ENCODE measurements at regions of chr3 and their contacts with region 1.

Region 1: DNA sequence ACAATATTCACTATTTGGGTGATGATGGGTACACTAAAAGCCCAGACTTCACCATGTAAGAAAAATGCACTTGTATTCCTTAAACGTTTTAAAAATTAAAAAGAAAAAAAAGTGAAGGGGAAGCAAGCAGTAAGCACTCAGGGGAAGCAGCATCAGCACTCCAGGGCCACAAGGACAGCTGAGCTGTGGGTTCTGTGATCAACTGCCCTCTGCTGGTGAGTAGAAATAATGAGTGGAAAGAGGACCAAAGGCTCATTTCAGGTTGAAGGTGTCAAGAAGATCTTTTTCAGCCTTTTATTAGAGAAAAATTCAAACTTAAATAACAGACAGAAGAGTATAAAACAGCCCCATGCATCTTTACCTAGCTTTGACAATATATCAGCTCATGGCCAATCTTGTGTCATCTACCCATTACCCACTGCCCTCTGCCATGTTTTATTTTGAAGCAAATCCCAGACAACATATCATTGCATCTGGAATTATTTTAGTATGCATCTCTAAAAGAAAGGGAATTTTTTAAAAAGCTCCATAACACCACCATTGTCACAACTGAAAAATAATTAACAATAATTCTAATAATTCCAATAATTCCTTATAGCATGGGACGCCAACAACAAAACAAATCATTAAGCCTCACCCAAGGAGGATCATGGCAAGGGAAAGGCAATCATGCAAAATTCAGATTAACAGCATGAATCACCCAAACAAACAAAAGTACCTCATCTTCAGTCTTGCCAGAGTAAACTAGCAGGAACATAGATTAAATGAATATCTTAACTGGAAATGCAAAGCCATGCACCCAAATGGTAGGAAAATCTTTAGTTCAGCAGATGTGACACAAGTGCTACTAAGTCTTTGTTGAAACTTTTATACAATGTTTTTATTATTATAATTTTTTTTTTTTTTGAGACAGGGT is 42.5 kb downstream of the TAMM41 start:
- DNase-seq: peak; percentile 40
- H3K4me3 ChIP-seq: no peak overlapping the region
- H3K27ac ChIP-seq: no peak overlapping the region
- H3K4me1 ChIP-seq: no peaks in the 10 kb centered on the region
- H3K27me3 ChIP-seq: no peaks in the 10 kb centered on the region
- CTCF ChIP-seq: peak; percentile 70 to 78

Region 2: DNA sequence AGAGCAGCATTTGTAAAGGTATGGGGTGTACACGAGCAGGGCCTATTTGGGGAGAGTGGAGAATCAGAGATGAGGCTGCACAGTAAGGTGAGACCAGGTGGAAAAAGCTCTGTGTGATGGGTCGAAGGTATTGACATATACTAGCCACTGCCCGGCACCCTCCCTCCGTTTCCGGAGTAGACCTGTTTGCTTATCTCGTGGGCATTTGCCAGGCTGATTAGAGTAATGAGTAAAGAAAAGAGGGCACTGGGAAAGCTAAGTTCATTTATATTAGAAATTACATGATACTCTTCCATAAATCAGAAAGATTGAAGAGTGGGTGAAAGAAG is 578.2 kb before region 1 on chr3:
- CTCF ChIA-PET with region 1: no interaction called
- dilution Hi-C with region 1: no loop called
- in situ Hi-C with region 1: no loop called
- intact Hi-C with region 1: no loop called
- DNase-seq: no peak
- H3K4me3 ChIP-seq: no peak overlapping the region
- H3K27ac ChIP-seq: peak overlapping the region; percentile 53
- H3K4me1 ChIP-seq: peaks cover 31% of the 10 kb centered on the region
- H3K27me3 ChIP-seq: no peaks in the 10 kb centered on the region
- CTCF ChIP-seq: no peak

Region 3: DNA sequence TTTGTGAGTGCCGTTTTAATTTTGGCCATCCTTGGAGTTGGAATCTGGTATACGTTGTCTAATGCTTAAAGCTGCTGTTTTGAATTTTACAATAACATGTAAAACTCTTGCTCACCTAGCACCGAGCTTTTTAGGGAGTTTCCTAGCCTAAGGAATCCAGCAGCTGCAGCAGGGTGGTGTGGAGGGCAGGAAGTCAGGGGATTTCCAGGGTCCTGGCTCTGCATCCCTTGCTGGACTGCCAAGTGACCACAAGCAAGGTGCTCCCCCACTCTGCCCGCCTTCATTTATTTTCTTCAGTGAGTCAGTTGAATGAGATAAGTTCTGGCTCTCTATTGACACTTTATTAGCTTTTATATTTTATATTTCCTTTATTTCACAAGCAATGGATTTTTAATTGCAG is 418.3 kb before region 1 on chr3:
- CTCF ChIA-PET with region 1: no interaction called
- dilution Hi-C with region 1: loop called (anchors 25 kb)
- in situ Hi-C with region 1: loop called in 1 of 2 experiments (anchors 10 kb)
- intact Hi-C with region 1: no loop called
- DNase-seq: peak; percentile 80
- H3K4me3 ChIP-seq: no peak overlapping the region
- H3K27ac ChIP-seq: peak overlapping the region; percentile 45
- H3K4me1 ChIP-seq: peaks cover 29% of the 10 kb centered on the region
- H3K27me3 ChIP-seq: no peaks in the 10 kb centered on the region
- CTCF ChIP-seq: no peak

Region 4: GRCh38 chr3:11420066-11420465 is 384.2 kb before region 1 on chr3:
- CTCF ChIA-PET with region 1: no interaction called
- dilution Hi-C with region 1: no loop called
- in situ Hi-C with region 1: no loop called
- intact Hi-C with region 1: no loop called
- DNase-seq: no peak
- H3K4me3 ChIP-seq: no peak overlapping the region
- H3K27ac ChIP-seq: no peak overlapping the region
- H3K4me1 ChIP-seq: no peaks in the 10 kb centered on the region
- H3K27me3 ChIP-seq: no peaks in the 10 kb centered on the region
- CTCF ChIP-seq: no peak

Region 5: GRCh38 chr3:11582191-11582968 is 221.9 kb before region 1 on chr3:
- CTCF ChIA-PET with region 1: no interaction called
- dilution Hi-C with region 1: no loop called
- in situ Hi-C with region 1: no loop called
- intact Hi-C with region 1: loop called (anchors 10 kb)
- DNase-seq: peak; percentile 63
- H3K4me3 ChIP-seq: peak overlapping the region; percentile 20 to 37 (median 20)
- H3K27ac ChIP-seq: peak overlapping the region; percentile 47
- H3K4me1 ChIP-seq: peaks cover 29% of the 10 kb centered on the region
- H3K27me3 ChIP-seq: no peaks in the 10 kb centered on the region
- CTCF ChIP-seq: no peak

Region 6: DNA sequence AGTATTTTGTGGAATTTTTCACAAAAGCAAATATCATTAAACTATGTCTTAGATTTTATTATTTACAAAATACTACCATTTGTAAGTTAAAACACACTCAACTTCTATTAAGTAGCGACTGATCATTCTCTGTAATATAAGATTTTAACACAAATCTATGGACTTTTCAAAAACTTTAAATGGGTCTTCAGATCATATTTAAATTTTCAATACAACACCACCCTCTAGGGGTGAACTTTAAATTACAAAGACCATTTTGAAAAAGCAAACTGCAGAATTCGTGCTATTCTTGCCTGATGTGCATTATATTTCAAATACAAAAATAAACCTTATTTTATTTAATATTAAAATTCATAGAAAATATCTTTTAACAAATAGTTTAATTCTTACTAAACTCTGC is 152.3 kb before region 1 on chr3:
- CTCF ChIA-PET with region 1: no interaction called
- dilution Hi-C with region 1: no loop called
- in situ Hi-C with region 1: loop called in 1 of 2 experiments (anchors 10 kb)
- intact Hi-C with region 1: loop called (anchors 2 kb)
- DNase-seq: no peak
- H3K4me3 ChIP-seq: no peak overlapping the region
- H3K27ac ChIP-seq: no peak overlapping the region
- H3K4me1 ChIP-seq: no peaks in the 10 kb centered on the region
- H3K27me3 ChIP-seq: no peaks in the 10 kb centered on the region
- CTCF ChIP-seq: peak; percentile 26 to 29

Region 7: DNA sequence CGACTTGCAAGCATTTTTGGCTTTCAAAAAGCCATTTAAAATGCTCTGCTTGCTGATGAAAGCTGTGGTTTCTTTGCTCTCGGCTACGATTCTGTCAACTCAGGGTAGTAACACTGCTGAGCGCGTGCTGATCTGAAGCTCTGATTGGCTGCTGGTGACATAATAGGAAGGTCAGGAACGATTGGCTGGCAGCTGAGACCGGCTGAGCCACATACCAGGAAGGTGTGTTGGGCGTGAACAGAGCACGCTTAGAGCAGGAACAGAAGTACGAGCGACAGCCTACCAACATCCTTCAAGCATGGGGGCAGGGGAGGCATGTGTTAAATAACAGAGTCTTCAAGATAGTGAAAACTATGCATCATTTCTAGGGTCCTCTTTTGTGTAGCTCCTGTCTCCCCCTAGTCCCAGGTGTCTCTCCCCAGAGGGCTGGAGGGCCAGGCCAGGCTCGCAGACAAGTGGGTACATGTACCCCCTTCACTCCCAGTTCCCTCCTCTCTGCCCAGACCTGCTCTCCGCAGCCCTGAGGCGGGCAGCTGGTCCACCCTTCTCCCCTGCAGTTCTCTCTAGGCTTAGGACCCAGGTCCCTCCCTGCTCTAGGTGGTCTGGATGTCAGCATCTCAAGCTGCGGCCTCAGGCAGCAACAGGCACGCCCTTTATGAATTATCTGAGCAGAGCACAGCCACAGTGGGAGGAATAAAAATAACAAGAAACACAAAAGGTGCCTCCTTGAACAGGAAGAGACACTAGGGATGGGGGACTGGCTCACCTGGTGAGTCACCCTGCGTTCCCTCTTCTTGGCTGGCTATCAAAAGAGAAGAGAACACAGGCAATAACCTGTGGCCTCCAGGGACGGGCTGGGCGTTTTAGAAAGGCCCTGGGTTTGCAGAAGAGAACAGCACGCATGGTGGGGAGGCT is 33.5 kb before region 1 on chr3:
- CTCF ChIA-PET with region 1: no interaction called
- dilution Hi-C with region 1: no loop called
- in situ Hi-C with region 1: no loop called
- intact Hi-C with region 1: loop called (anchors 1 kb)
- DNase-seq: peak; percentile 99
- H3K4me3 ChIP-seq: peak overlapping the region; percentile 1 to 36 (median 14)
- H3K27ac ChIP-seq: peak overlapping the region; percentile 90
- H3K4me1 ChIP-seq: peaks cover 33% of the 10 kb centered on the region
- H3K27me3 ChIP-seq: no peaks in the 10 kb centered on the region
- CTCF ChIP-seq: no peak

Region 8: GRCh38 chr3:11835028-11835639 is 30.9 kb after region 1 on chr3:
- CTCF ChIA-PET with region 1: no interaction called
- dilution Hi-C with region 1: no loop called
- in situ Hi-C with region 1: no loop called
- intact Hi-C with region 1: loop called (anchors 2 kb)
- DNase-seq: no peak
- H3K4me3 ChIP-seq: no peak overlapping the region
- H3K27ac ChIP-seq: no peak overlapping the region
- H3K4me1 ChIP-seq: no peaks in the 10 kb centered on the region
- H3K27me3 ChIP-seq: no peaks in the 10 kb centered on the region
- CTCF ChIP-seq: peak; percentile 41 to 44

Region 9: DNA sequence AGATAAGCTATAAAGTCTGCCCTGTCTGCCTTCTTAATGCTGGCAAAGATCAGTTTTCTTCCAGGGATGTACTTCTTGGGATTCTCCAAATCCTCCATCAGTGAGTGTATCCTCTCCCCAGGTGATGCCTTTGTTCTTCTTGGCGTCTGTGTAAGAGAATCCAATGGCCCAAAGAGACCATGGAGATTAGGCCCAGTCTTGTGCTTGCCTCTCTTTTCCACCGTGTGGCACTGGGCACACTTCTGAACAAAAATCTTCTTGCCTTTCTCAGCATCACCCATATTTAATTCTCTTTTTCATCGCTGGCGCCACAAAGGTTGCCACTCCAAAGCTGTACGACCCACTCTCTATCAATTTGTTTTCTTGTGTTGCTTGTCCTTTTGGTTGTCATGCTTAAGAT is 74.6 kb after region 1 on chr3:
- CTCF ChIA-PET with region 1: no interaction called
- dilution Hi-C with region 1: no loop called
- in situ Hi-C with region 1: no loop called
- intact Hi-C with region 1: no loop called
- DNase-seq: no peak
- H3K4me3 ChIP-seq: no peak overlapping the region
- H3K27ac ChIP-seq: no peak overlapping the region
- H3K4me1 ChIP-seq: no peaks in the 10 kb centered on the region
- H3K27me3 ChIP-seq: peaks cover 2% of the 10 kb centered on the region
- CTCF ChIP-seq: no peak